Activated naive CD4-positive, alpha-beta T cell treated with anti-CD3 and anti-CD28 coated beads, Interleukin-2, amount 10 ng/mL, durations not matched to agents 7 days and 5 days (primary cell): ENCODE measurements at regions of chr5 and their contacts with region 1.

Region 1: DNA sequence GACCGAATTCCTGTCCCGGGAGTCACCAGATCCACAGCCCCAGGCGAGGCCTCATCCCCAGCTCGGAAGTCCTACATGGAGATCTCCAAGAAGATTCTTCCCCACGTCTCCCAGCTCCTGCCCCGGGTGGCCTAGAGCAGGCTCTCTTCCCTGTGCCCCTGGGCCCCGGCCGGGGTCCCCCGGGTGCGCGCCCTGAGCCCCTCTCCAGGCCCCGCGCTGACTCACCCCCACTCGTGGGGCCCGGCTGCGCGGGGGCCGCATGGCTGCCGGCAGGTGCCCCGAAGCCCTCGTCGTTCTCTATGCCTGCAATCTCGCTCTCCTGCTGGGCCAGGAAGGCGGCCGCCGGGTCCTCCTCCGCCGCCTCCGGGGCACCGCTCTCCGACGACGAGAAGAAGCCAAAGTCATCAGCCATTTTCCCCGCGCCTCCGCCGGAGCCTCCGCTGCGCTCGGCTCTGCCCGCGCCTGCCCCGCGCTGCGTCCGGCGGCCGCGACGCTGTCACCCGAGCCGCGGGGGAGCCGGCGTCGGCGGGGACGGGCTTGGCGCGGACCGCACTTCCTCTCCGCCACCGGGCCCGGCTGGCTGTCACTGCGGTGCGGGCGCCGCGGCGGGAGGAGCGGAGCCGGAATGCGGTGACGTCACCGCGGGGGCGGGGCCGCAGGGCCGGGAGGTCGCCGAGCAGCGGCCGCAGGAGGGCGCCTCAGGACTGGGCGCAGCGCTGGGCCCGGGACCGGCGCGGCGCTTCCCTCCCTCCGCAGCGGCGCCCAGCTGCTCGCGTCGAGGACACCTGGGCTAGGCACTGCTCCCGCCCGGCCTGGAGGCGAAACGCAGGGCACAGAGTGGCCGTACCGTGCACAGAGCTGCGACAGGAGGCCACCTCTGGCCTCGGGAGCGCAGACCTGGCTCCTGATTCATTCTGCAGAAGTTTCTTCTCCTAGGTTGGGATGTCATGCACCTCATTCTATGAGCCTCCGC is at the start of gene CLTB:
- DNase-seq: peak; percentile 90
- H3K4me3 Mint-ChIP-seq: peak within 1 kb of the TSS; percentile 80
- H3K27ac Mint-ChIP-seq: peak within 1 kb of the TSS; percentile 81
- H3K4me1 Mint-ChIP-seq: peaks cover 38% of the 10 kb centered on the region
- H3K27me3 Mint-ChIP-seq: peaks cover 21% of the 10 kb centered on the region

Region 2: GRCh38 chr5:176447982-176448608 is 31.9 kb after region 1 on chr5 and contains the start of gene FAF2:
- CTCF ChIA-PET with region 1: interaction called, 12 read pairs
- DNase-seq: peak; percentile 96
- H3K4me3 Mint-ChIP-seq: peak within 1 kb of the TSS; percentile 99
- H3K27ac Mint-ChIP-seq: peak within 1 kb of the TSS; percentile 96
- H3K4me1 Mint-ChIP-seq: peaks cover 36% of the 10 kb centered on the region
- H3K27me3 Mint-ChIP-seq: peaks cover 20% of the 10 kb centered on the region

Region 3: DNA sequence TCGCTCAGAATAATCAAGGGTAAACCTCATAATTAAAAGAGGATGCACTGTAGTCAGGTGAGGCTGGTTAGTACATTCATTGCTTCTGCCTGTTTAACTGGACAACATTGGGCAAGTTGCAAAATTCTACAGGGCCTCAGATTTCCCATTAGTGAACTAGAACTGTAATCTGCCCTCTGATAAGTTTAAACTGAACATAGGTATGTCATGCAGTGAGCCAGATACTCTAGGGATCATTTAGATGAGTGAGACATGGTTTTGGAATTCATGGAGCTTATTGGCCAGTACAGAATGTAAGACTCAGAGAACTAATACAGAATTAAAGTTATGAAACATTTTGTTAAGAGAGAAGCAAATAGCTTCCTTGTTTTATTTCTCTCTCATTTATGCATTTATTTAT is 85.1 kb after region 1 on chr5:
- CTCF ChIA-PET with region 1: no interaction called
- DNase-seq: no peak
- H3K4me3 Mint-ChIP-seq: no peak overlapping the region
- H3K27ac Mint-ChIP-seq: no peak overlapping the region
- H3K4me1 Mint-ChIP-seq: no peaks in the 10 kb centered on the region
- H3K27me3 Mint-ChIP-seq: no peaks in the 10 kb centered on the region

Region 4: DNA sequence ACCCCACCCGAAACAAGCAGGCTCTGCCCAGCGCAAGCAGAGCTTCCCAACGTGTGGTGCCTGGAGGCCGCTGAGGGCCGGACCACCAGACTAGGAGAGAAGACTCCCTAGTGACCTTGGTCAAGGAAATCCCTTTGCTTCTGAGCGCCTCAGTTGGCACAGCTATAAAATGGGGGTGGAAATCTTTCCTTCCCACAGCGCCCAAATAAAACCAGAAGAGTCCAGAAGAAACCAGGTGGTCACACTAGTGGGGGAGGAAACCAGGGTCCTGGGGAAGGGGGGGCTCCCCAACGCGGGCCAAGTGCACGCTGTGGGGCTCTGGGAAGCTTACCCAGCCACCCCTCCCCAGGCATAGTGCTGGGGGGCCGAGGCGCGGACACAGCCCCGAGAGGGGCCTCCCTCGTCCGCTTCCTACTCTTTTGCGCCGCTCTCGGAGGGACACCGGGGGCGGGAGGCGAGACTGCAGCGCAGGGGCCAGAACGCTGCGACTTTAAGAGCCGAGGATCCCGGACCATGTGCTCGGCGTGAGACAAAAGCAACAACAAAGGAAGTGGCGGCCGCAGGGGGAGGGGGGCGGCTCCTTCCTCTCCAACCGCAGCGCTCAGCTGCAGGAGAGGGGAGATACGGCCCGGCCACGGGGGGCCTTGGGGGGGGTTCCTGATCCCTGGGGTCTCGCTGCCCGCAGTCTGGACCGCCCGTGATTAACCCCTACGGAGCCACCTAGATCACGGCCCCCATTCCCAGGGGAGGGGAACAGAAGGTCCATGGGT is 120.1 kb after region 1 on chr5:
- CTCF ChIA-PET with region 1: interaction called, 14 read pairs
- DNase-seq: peak; percentile 93
- H3K4me3 Mint-ChIP-seq: peak overlapping the region; percentile 96
- H3K27ac Mint-ChIP-seq: peak overlapping the region; percentile 100
- H3K4me1 Mint-ChIP-seq: peaks cover 67% of the 10 kb centered on the region
- H3K27me3 Mint-ChIP-seq: no peaks in the 10 kb centered on the region

Region 5: GRCh38 chr5:176543428-176544173 is 127.4 kb after region 1 on chr5:
- CTCF ChIA-PET with region 1: interaction called, 27 read pairs
- DNase-seq: peak; percentile 86
- H3K4me3 Mint-ChIP-seq: peak overlapping the region; percentile 93
- H3K27ac Mint-ChIP-seq: peak overlapping the region; percentile 97
- H3K4me1 Mint-ChIP-seq: peaks cover 65% of the 10 kb centered on the region
- H3K27me3 Mint-ChIP-seq: no peaks in the 10 kb centered on the region

Region 6: GRCh38 chr5:176573564-176574296 is 157.5 kb after region 1 on chr5:
- CTCF ChIA-PET with region 1: interaction called, 14 read pairs
- DNase-seq: peak; percentile 83
- H3K4me3 Mint-ChIP-seq: no peak overlapping the region
- H3K27ac Mint-ChIP-seq: no peak overlapping the region
- H3K4me1 Mint-ChIP-seq: peaks cover 7% of the 10 kb centered on the region
- H3K27me3 Mint-ChIP-seq: peaks cover 34% of the 10 kb centered on the region

Region 7: DNA sequence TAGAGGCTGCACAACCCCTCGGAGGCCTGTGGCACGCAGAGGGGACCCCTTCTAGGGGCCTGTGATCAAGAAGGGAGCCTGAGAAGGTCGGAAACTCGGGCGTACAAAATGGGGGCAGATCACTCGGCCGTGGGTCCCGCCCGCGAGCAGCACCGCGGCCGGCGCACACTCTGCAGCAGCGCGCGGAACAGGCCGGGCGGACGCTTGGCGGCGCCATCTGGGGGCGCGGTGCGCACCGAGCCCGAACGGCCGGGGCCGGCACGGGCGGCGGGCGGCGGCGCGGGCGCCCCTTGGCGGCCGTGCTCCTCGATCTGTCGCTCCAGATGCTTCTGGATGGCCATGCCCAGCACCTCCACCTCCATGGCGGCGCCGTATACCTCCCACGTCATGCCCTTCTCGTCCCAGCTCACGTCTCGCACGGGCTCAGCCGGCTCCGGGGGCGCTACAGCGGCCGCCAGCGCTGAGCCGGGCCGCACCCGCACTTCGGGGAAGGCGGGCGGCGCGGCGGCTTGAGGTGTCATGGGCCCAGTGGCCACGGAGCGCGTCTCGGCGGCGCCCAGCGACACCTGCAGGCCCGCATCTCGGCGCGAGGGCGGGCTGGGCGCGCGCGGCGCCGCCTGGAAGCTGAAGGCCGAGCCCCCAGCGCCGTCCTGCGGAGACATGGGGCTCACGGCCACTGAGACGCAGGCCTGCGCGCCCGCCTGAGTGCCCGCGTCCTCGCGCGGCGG is 180.6 kb after region 1 on chr5:
- CTCF ChIA-PET with region 1: interaction called, 10 read pairs
- DNase-seq: peak; percentile 77
- H3K4me3 Mint-ChIP-seq: peak overlapping the region; percentile 64
- H3K27ac Mint-ChIP-seq: peak overlapping the region; percentile 46
- H3K4me1 Mint-ChIP-seq: peaks cover 9% of the 10 kb centered on the region
- H3K27me3 Mint-ChIP-seq: peaks cover 69% of the 10 kb centered on the region